Uterus (tissue), 4 donors: ENCODE measurements at regions of chr4 and their contacts with region 1.

Region 1: DNA sequence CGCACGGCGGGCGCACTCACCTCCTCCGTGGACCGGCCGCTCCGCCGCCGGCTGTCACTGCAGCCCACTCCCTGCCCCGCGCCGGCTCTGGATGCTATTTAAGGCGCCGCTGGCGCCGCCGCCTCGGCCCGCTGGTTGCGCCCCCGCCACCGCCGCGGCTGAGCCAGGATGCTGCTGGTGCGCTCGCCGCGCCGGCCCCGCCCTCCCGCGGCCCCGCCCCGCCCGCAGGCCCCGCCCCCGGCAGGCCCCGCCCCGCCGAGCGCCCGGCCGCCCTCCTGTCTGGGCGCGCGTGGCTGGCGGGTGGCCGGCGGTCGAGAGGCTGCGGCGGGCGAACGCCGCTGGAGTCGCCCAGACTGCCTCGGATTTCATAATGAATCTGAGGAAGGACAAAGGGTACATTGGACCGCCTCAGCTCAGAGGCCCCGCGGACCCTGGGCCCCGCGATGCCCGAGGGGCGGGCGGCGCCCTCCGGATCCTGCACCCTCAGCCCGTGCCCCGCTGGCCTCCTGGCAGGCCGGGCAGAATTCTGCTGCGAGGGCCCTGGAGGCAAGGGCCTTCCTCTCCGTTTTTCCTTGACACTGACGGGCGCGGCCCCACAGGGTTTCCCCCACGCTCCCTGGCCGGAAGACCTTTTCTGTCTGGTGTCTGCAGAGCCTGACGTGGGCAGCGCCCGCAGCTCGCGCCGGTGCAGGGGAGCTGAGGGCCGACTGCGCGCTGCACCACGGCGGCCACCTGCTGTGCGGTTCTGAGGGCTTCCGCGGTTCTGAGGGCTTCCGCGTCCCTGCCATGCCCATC is at the start of gene ACSL1:
- DNase-seq: peak; percentile 78 to 84
- H3K4me3 ChIP-seq: peak within 1 kb of the TSS; percentile 32 to 50
- H3K27ac ChIP-seq: peak within 1 kb of the TSS; percentile 76 to 79
- H3K4me1 ChIP-seq: no peaks in the 10 kb centered on the region
- H3K27me3 ChIP-seq: no peaks in the 10 kb centered on the region
- CTCF ChIP-seq: peak in 2 of 4 experiments; percentile 26 to 39
- POLR2A ChIP-seq: peak; percentile 80 to 82
- total RNA-seq, gene ACSL1: 27.3 to 98.4 (median 70.1) TPM

Region 2: DNA sequence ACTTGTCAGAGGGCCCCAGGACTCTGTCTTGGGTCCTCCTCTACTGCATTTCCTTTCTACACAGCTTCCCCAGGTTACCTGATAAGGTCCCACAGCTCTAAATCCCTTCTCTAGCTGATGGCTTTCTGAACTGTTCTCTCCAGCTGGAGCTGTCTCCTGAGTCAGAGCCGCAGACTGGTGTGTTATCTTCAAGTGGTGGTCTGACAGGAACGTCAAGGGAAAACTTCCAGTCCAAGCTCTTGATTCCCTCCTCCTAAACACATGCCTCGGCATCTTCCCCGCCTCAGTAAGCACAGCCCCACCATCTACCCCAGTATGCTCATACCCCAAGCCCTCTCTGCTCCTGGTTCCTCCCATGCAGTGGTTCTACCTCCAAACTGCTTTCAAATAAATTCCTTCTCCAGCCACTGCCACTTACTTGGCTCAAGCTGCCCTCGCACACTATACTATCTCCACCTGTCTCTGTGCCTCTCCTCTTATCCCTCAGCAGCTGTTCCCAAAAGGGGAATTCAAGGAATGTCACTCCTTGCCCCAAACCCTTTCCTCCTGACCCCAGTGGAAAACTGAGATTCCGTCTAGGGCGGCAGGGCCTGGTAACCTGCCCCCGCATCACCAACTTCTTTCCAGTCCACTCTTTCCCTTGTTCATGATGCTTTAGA is 75.0 kb before region 1 on chr4:
- intact Hi-C with region 1: loop called (anchors 5 kb)
- DNase-seq: no peak
- H3K4me3 ChIP-seq: no peak overlapping the region
- H3K27ac ChIP-seq: no peak overlapping the region
- H3K4me1 ChIP-seq: no peaks in the 10 kb centered on the region
- H3K27me3 ChIP-seq: no peaks in the 10 kb centered on the region
- CTCF ChIP-seq: no peak
- POLR2A ChIP-seq: no peak

Region 3: DNA sequence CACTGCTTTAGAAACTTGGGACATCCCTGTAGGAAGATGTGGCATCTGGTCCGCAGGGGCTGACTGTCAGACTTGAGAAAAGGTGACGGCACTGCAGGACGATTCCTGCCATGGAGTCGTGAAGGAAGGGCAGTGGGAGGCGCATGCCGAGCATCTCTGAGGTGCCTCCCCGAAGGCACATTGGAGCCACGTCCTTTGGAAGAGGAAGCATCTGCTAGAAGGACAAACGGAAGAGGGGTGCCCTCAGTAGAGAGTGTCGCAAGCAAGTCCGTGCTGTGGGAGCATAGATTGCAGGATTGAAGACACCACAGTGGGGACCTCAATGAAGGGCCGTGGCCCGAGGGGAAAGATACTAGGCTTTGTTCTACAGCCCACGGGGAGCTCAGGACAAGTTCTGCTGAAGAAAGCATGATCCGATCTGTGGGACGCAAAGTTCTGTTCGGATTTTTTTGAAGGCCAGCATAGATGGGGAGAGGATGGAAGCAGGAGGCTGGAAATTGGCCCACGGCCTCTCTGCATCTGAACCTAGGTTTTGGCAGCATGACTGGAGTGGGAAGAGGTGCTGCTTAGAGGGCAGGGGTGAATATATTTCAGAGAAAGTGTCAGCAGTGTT is 168.0 kb after region 1 on chr4:
- intact Hi-C with region 1: no loop called
- DNase-seq: no peak
- H3K4me3 ChIP-seq: no peak overlapping the region
- H3K27ac ChIP-seq: no peak overlapping the region
- H3K4me1 ChIP-seq: no peaks in the 10 kb centered on the region
- H3K27me3 ChIP-seq: no peaks in the 10 kb centered on the region
- CTCF ChIP-seq: no peak
- POLR2A ChIP-seq: no peak